Activated naive CD8-positive, alpha-beta T cell treated with anti-CD3 and anti-CD28 coated beads, Interleukin-2, amount 10 ng/mL, durations not matched to agents 7 days and 5 days (primary cell): ENCODE measurements at regions of chr15 and their contacts with region 1.

Region 1: DNA sequence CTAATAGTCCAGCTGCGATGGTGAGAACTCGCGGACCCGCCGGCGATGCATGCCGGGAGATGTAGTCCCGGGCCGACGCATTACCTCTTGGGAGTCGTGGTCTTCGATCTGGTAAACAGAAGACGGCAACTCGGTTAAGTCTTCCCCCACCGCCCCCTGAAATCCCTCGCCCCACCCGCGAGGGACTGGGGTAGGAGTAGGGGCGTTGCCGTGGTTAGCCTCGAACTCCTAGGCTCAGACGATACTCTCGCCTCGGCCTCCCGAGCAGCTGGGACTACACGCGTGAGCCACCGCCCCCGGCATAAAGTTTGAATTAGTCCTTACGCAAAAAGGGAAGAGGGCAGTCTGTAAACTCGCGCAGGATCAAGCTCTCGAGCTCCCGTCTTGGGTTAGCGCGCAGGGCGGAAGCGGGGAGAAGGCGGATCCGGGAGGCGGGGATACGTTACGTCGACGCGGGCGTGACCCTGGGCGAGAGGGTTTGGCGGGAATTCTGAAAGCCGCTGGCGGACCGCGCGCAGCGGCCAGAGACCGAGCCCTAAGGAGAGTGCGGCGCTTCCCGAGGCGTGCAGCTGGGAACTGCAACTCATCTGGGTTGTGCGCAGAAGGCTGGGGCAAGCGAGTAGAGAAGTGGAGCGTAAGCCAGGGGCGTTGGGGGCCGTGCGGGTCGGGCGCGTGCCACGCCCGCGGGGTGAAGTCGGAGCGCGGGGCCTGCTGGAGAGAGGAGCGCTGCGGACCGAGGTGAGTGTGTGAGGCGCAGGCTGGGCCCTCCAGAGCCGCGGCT is at the start of gene RAD51:
- DNase-seq: peak; percentile 93
- ATAC-seq: peak; percentile 91
- H3K4me3 Mint-ChIP-seq: peak within 1 kb of the TSS; percentile 100
- H3K27ac Mint-ChIP-seq: peak within 1 kb of the TSS; percentile 100
- H3K4me1 Mint-ChIP-seq: peaks cover 31% of the 10 kb centered on the region
- H3K27me3 Mint-ChIP-seq: no peaks in the 10 kb centered on the region
- total RNA-seq, gene RAD51: 52.4 to 54.5 TPM

Region 2: GRCh38 chr15:40569139-40569953 is 125.5 kb before region 1 on chr15 and contains the start of gene RPUSD2:
- POLR2A ChIA-PET with region 1: interaction called, 16 read pairs
- DNase-seq: peak; percentile 94
- ATAC-seq: peak; percentile 65
- H3K4me3 Mint-ChIP-seq: peak within 1 kb of the TSS; percentile 96
- H3K27ac Mint-ChIP-seq: peak within 1 kb of the TSS; percentile 98
- H3K4me1 Mint-ChIP-seq: peaks cover 30% of the 10 kb centered on the region
- H3K27me3 Mint-ChIP-seq: peaks cover 6% of the 10 kb centered on the region
- total RNA-seq, gene RPUSD2: 15.8 to 17.7 TPM

Region 3: GRCh38 chr15:40600956-40601355 is 93.9 kb before region 1 on chr15:
- POLR2A ChIA-PET with region 1: no interaction called
- DNase-seq: no peak
- ATAC-seq: no peak
- H3K4me3 Mint-ChIP-seq: no peak overlapping the region
- H3K27ac Mint-ChIP-seq: no peak overlapping the region
- H3K4me1 Mint-ChIP-seq: peaks cover 12% of the 10 kb centered on the region
- H3K27me3 Mint-ChIP-seq: no peaks in the 10 kb centered on the region

Region 4: DNA sequence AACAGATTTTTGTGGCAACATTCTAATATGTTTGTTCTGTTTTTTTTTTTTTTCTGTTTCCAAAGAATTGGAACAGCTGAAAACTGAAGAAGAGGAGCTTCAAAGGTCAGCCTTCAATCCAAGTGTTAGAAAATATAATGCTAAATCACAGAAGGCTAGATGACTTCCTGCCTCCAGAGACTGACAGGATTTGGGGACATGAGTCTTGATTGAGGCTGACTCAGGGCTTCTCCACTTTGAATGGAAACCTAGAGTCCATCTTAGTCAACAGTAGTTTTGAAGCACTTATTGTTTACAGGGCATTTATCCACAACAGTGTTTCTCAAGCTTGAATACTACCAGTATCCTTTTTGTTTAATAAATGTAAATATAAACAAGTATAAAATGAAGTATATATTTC is 44.4 kb before region 1 on chr15:
- POLR2A ChIA-PET with region 1: no interaction called
- DNase-seq: no peak
- ATAC-seq: no peak
- H3K4me3 Mint-ChIP-seq: no peak overlapping the region
- H3K27ac Mint-ChIP-seq: no peak overlapping the region
- H3K4me1 Mint-ChIP-seq: no peaks in the 10 kb centered on the region
- H3K27me3 Mint-ChIP-seq: no peaks in the 10 kb centered on the region

Region 5: DNA sequence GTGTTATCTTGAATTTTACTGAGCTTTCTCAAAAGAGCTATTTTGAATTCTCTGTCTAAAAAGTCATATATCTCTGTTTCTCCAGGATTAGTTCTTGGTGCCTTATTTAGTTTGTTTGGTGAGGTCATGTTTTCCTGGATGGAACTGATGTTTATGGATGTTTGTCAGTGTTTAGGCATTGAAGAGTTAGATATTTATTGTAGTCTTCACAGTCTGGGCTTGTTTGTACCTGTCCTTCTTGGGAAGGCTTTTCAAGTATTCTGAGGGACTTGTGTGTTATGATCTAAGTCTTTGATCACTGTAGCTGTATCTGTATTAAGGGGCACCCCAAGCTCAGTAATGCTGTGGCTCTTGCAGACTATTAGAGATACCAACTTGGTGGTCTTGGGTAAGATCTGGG is 10.5 kb before region 1 on chr15:
- POLR2A ChIA-PET with region 1: interaction called, 11 read pairs
- DNase-seq: no peak
- ATAC-seq: no peak
- H3K4me3 Mint-ChIP-seq: no peak overlapping the region
- H3K27ac Mint-ChIP-seq: no peak overlapping the region
- H3K4me1 Mint-ChIP-seq: no peaks in the 10 kb centered on the region
- H3K27me3 Mint-ChIP-seq: peaks cover 7% of the 10 kb centered on the region

Region 6: GRCh38 chr15:40722934-40723333 is 28.1 kb after region 1 on chr15:
- POLR2A ChIA-PET with region 1: no interaction called
- DNase-seq: no peak
- ATAC-seq: no peak
- H3K4me3 Mint-ChIP-seq: no peak overlapping the region
- H3K27ac Mint-ChIP-seq: no peak overlapping the region
- H3K4me1 Mint-ChIP-seq: peaks cover 9% of the 10 kb centered on the region
- H3K27me3 Mint-ChIP-seq: no peaks in the 10 kb centered on the region

Region 7: GRCh38 chr15:40743921-40744814 is 49.3 kb after region 1 on chr15:
- POLR2A ChIA-PET with region 1: interaction called, 20 read pairs
- DNase-seq: peak; percentile 66
- ATAC-seq: peak; percentile 97
- H3K4me3 Mint-ChIP-seq: peak overlapping the region; percentile 66
- H3K27ac Mint-ChIP-seq: peak overlapping the region; percentile 92
- H3K4me1 Mint-ChIP-seq: peaks cover 42% of the 10 kb centered on the region
- H3K27me3 Mint-ChIP-seq: no peaks in the 10 kb centered on the region

Region 8: GRCh38 chr15:40763801-40764732 is 69.2 kb after region 1 on chr15 and contains the start of gene GCHFR:
- POLR2A ChIA-PET with region 1: interaction called, 25 read pairs
- DNase-seq: peak; percentile 85
- ATAC-seq: peak; percentile 56
- H3K4me3 Mint-ChIP-seq: peak within 1 kb of the TSS; percentile 82
- H3K27ac Mint-ChIP-seq: peak within 1 kb of the TSS; percentile 89
- H3K4me1 Mint-ChIP-seq: peaks cover 20% of the 10 kb centered on the region
- H3K27me3 Mint-ChIP-seq: peaks cover 5% of the 10 kb centered on the region
- total RNA-seq, gene GCHFR: 58.2 to 61.5 TPM

Region 9: DNA sequence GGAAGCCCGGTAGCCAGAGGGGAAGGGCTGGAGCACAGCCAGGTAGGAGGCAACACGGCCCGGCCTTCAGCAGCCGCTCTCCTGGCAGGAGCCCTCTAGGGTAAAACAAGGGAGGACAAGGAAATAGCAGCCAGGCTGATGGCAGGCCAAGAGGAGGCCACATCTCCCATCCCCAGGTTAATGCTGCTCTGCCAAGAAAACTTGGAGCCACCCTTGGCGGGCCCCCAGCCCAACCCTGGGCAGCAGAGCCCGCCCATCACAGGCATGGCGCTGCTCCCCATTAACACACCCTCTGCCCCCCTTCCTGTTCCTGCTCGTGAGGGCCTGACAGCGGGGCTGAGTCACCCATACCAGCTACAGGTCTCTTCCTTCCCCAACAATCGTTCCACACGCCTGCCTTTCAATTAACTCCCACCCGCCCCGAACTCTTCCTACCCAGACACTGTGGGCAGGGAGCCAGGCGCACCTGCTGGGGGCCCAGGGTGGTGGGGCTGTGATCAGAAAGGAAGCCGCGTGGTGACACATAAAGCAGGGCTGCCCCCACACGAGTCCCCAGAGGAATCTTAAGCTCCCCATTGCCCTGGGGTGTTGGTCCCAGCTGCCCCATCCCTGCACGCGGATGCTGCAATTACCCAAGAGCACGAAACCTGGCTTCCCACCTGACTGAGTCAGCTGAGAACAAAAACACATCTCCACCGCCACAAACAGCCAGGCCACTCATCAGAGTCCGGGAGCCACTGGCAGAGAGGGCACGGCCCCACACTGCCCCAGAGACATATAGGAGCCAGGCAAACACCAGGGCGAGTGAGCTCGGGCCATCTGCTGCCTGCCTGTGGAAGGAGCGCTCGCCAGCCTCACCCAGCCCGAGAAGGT is 74.6 kb after region 1 on chr15 and contains the start of gene C15orf62:
- POLR2A ChIA-PET with region 1: interaction called, 25 read pairs
- DNase-seq: peak; percentile 64
- ATAC-seq: peak; percentile 67
- H3K4me3 Mint-ChIP-seq: peak within 1 kb of the TSS; percentile 58
- H3K27ac Mint-ChIP-seq: peak within 1 kb of the TSS; percentile 89
- H3K4me1 Mint-ChIP-seq: peaks cover 26% of the 10 kb centered on the region
- H3K27me3 Mint-ChIP-seq: no peaks in the 10 kb centered on the region
- total RNA-seq, gene C15orf62: 2.4 TPM

Region 10: GRCh38 chr15:40873625-40874561 is 179.0 kb after region 1 on chr15 and contains the start of gene RHOV:
- POLR2A ChIA-PET with region 1: no interaction called
- DNase-seq: peak; percentile 63
- ATAC-seq: peak; percentile 75
- H3K4me3 Mint-ChIP-seq: peak within 1 kb of the TSS; percentile 80
- H3K27ac Mint-ChIP-seq: no peak within 1 kb of the TSS
- H3K4me1 Mint-ChIP-seq: peaks cover 13% of the 10 kb centered on the region
- H3K27me3 Mint-ChIP-seq: peaks cover 35% of the 10 kb centered on the region
- total RNA-seq, gene RHOV: not detected